ENCODE measurements at regions of chr9 and their contacts with region 1.

Region 1: GRCh38 chr9:128881901-128882681 is at the starts of genes KYAT1 and LRRC8A:
- DNase-seq: peak; percentile 99
- ATAC-seq: peak; percentile 95
- H3K4me3 Mint-ChIP-seq: peak within 1 kb of the TSS; percentile 94
- H3K27ac Mint-ChIP-seq: peak within 1 kb of the TSS; percentile 91
- H3K4me1 Mint-ChIP-seq: peaks cover 56% of the 10 kb centered on the region
- H3K27me3 Mint-ChIP-seq: no peaks in the 10 kb centered on the region
- total RNA-seq, gene KYAT1: 14.8 to 18.5 TPM
- total RNA-seq, gene LRRC8A: 14.9 to 15.5 TPM

Region 2: GRCh38 chr9:128067876-128068613 is 814.0 kb before region 1 on chr9 and contains the start of gene SLC25A25:
- CTCF ChIA-PET with region 1: no interaction called
- POLR2A ChIA-PET with region 1: no interaction called
- intact Hi-C with region 1: loop called in 1 of 2 experiments (anchors 5 kb)
- DNase-seq: peak; percentile 100
- ATAC-seq: peak; percentile 84
- H3K4me3 Mint-ChIP-seq: no peak within 1 kb of the TSS
- H3K27ac Mint-ChIP-seq: peak within 1 kb of the TSS; percentile 90
- H3K4me1 Mint-ChIP-seq: peaks cover 53% of the 10 kb centered on the region
- H3K27me3 Mint-ChIP-seq: no peaks in the 10 kb centered on the region
- total RNA-seq, gene SLC25A25: 6.9 to 10.8 TPM

Region 3: DNA sequence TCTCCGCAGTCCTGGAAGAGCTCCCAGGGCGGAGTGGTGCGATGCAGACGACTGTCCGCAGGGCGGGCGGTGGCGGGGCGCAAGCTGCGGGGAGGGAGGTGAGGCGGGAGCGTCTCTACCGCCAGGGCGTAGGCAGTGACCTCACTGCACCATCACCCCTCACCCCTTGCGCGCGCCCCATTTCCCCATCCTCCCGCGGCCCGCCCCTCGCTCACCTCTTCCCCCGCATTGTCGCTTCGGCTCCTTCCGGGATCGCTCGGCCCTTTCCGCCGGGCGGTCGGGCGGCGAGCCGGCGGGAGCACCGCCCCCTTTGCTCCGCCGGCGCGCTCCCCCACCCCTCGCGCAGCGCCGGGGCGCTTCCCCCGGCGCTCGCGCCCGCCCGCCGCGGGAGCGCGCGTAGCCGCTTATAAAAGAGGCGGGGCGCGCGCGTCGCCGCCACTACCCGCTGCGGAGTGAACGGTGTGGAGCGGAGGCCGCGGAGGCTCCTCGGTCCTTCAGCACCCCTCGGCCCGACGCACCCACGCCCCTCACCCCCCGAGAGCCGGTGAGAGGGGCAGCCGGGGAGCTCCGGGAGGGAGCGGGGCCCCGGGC is 329.8 kb before region 1 on chr9 and contains the start of gene SPTAN1:
- CTCF ChIA-PET with region 1: no interaction called
- POLR2A ChIA-PET with region 1: no interaction called
- intact Hi-C with region 1: loop called in 1 of 2 experiments (anchors 5 kb)
- DNase-seq: peak; percentile 98
- ATAC-seq: peak; percentile 78
- H3K4me3 Mint-ChIP-seq: no peak within 1 kb of the TSS
- H3K27ac Mint-ChIP-seq: peak within 1 kb of the TSS; percentile 97
- H3K4me1 Mint-ChIP-seq: peaks cover 34% of the 10 kb centered on the region
- H3K27me3 Mint-ChIP-seq: no peaks in the 10 kb centered on the region
- total RNA-seq, gene SPTAN1: 192 to 269 TPM

Region 4: GRCh38 chr9:128771745-128772519 is 110.2 kb before region 1 on chr9 and contains the start of gene ZER1:
- CTCF ChIA-PET with region 1: interaction called, 3 read pairs
- POLR2A ChIA-PET with region 1: no interaction called
- intact Hi-C with region 1: loop called in 1 of 2 experiments (anchors 1 kb)
- DNase-seq: peak; percentile 97
- ATAC-seq: peak; percentile 94
- H3K4me3 Mint-ChIP-seq: peak within 1 kb of the TSS; percentile 82
- H3K27ac Mint-ChIP-seq: peak within 1 kb of the TSS; percentile 86
- H3K4me1 Mint-ChIP-seq: peaks cover 18% of the 10 kb centered on the region
- H3K27me3 Mint-ChIP-seq: no peaks in the 10 kb centered on the region
- total RNA-seq, gene ZER1: 17.1 to 19.3 TPM

Region 5: DNA sequence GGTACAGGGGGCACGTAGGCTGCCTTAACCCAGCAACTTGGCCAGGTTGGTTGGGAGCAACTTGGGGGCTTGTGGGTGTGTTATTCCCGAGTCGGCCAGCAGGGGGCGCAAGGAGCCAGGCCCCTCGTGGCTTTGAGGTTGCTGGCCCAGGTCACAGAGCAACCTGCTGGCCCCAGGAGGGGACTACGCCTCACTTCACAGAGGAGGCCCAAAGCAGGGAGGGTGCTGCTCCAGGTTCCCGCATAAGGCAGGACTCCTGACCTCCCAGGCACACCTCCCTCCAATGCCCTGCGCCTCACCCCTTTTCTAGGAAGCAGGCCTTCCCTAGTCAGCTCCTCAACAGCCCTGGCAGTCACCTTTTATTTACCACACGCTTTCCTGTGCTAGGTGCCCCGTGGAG is 18.4 kb before region 1 on chr9:
- CTCF ChIA-PET with region 1: interaction called, 29 read pairs
- POLR2A ChIA-PET with region 1: no interaction called
- intact Hi-C with region 1: loop called (anchors 1 to 2 kb)
- DNase-seq: peak; percentile 93
- ATAC-seq: peak; percentile 98
- H3K4me3 Mint-ChIP-seq: no peak overlapping the region
- H3K27ac Mint-ChIP-seq: no peak overlapping the region
- H3K4me1 Mint-ChIP-seq: peaks cover 5% of the 10 kb centered on the region
- H3K27me3 Mint-ChIP-seq: no peaks in the 10 kb centered on the region

Region 6: DNA sequence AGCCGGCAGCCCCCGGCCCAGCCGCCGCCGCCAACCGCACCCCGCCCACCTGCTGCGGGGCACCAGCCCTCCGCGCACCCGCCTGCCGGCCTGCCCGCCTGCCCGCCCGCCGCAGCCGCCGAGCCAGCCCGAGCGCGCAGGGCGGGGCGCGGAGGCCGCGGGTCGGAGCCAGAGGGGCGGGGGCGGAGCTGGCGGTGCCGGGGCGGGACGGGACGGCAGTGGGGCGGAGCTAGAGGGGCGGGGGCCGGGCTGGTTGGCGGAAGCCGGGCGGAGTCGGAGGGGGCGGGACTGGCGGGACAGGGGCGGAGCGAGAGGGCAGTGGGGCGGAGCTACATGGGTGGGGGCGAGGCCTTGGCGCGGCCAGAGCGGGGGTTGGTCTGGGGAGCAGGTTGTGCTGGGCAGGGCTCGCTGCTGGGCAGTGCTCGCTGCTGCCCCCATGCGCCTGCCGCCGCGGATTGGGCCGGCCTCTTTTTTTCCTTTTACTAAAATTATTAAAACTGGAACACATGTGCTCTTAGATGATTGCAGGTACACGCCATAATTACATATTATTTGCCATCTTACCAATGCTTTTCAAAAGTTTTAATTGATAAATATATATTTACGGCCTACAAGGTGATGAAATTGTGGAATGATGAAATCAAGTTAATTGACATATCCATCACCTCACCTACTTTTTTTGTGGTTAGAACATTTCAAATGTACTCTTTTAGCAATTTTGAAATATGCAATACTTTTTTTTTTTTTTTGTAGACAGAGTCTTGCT is 146.3 kb after region 1 on chr9 and contains the start of gene SH3GLB2:
- CTCF ChIA-PET with region 1: no interaction called
- POLR2A ChIA-PET with region 1: no interaction called
- intact Hi-C with region 1: loop called in 1 of 2 experiments (anchors 1 kb)
- DNase-seq: peak; percentile 98
- ATAC-seq: peak; percentile 93
- H3K4me3 Mint-ChIP-seq: peak within 1 kb of the TSS; percentile 81
- H3K27ac Mint-ChIP-seq: peak within 1 kb of the TSS; percentile 52
- H3K4me1 Mint-ChIP-seq: peaks cover 17% of the 10 kb centered on the region
- H3K27me3 Mint-ChIP-seq: no peaks in the 10 kb centered on the region
- total RNA-seq, gene SH3GLB2: 49.1 to 53.7 TPM

Region 7: GRCh38 chr9:129626079-129626624 is 744.1 kb after region 1 on chr9 and contains the start of gene NTMT1:
- CTCF ChIA-PET with region 1: no interaction called
- POLR2A ChIA-PET with region 1: no interaction called
- intact Hi-C with region 1: loop called in 1 of 2 experiments (anchors 5 kb)
- DNase-seq: peak; percentile 95
- ATAC-seq: peak; percentile 76
- H3K4me3 Mint-ChIP-seq: peak within 1 kb of the TSS; percentile 77
- H3K27ac Mint-ChIP-seq: peak within 1 kb of the TSS; percentile 93
- H3K4me1 Mint-ChIP-seq: peaks cover 52% of the 10 kb centered on the region
- H3K27me3 Mint-ChIP-seq: peaks cover 4% of the 10 kb centered on the region
- total RNA-seq, gene NTMT1: 50.1 to 69.2 TPM